CD8-positive, alpha-beta T cell (primary cell): ENCODE measurements at regions of chr12 and their contacts with region 1.

Region 1: DNA sequence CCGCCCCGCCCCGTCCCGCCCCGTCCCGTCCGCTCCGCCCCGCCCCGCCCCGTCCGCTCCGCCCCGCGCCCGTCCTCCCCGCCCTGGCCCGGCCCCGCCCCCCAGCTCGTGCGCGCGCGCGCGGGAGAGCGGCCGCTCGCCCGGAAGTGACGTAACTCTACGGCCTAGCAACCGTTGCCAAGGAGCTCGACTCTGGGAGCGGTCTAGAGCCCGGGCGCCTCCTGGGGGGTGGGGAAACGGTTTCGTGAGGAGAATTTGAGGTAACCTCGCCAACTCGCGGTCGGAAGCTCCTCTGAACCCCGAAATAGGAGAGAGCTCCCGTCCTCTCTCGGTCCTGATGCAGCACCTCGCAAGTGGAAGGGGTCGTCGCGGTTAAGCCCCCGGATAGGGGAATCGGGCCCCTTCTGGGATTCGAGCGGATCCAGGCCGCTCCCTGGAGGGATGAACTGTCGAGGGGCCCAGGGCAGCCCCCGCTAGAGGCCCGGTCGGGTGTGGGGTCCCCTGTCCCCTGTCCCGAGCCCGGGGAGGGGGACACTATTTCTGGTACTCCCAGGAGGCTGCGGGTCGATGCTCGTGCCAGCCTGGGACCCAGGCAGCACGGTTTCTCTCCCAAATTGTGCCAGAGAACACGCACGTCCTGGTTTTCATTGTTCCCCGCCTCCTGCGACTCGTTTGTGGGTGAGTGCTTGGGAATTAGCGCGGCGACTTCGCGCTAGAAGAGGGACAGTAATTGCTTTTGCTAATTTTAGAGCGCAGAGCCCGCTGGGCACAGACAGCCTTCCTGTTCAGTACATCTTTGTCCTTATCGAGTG is at the start of gene IFT81:
- DNase-seq: peak; percentile 94 to 99 (median 96)
- ATAC-seq: peak; percentile 95
- H3K4me3 ChIP-seq: peak within 1 kb of the TSS; percentile 69 to 96
- H3K4me3 Mint-ChIP-seq: peak within 1 kb of the TSS; percentile 91
- H3K27ac ChIP-seq: peak within 1 kb of the TSS; percentile 60 to 73
- H3K27ac Mint-ChIP-seq: peak within 1 kb of the TSS; percentile 83
- H3K4me1 ChIP-seq: peaks cover 10% of the 10 kb centered on the region
- H3K4me1 Mint-ChIP-seq: peaks cover 8% of the 10 kb centered on the region
- H3K27me3 ChIP-seq: no peaks in the 10 kb centered on the region
- H3K27me3 Mint-ChIP-seq: peaks cover 3% of the 10 kb centered on the region
- CTCF ChIP-seq: no peak
- total RNA-seq, gene IFT81: 0.25 to 0.43 TPM

Region 2: DNA sequence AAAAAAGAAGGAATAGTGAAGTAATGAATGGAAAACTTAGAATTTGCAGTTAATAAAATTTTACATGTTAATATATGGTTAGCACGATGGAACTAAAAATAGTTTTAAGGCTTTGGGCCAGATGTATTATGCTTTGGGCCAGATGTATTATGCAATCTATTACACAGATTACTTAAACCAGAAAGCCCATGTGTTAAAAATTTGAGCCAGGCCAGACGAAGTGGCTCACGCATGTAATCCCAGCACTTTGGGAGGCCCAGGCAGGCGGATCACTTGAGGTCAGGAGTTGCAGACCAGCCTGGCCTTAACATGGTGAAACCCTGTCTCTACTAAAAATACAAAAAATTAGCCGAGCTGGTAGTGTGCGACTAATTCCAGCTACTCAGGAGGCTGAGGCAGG is 17.0 kb after region 1 on chr12:
- CTCF ChIA-PET with region 1: no interaction called
- POLR2A ChIA-PET with region 1: no interaction called
- intact Hi-C with region 1: no loop called
- DNase-seq: no peak
- ATAC-seq: no peak
- H3K4me3 ChIP-seq: no peak overlapping the region
- H3K4me3 Mint-ChIP-seq: no peak overlapping the region
- H3K27ac ChIP-seq: no peak overlapping the region
- H3K27ac Mint-ChIP-seq: no peak overlapping the region
- H3K4me1 ChIP-seq: no peaks in the 10 kb centered on the region
- H3K4me1 Mint-ChIP-seq: no peaks in the 10 kb centered on the region
- H3K27me3 ChIP-seq: no peaks in the 10 kb centered on the region
- H3K27me3 Mint-ChIP-seq: no peaks in the 10 kb centered on the region
- CTCF ChIP-seq: no peak

Region 3: DNA sequence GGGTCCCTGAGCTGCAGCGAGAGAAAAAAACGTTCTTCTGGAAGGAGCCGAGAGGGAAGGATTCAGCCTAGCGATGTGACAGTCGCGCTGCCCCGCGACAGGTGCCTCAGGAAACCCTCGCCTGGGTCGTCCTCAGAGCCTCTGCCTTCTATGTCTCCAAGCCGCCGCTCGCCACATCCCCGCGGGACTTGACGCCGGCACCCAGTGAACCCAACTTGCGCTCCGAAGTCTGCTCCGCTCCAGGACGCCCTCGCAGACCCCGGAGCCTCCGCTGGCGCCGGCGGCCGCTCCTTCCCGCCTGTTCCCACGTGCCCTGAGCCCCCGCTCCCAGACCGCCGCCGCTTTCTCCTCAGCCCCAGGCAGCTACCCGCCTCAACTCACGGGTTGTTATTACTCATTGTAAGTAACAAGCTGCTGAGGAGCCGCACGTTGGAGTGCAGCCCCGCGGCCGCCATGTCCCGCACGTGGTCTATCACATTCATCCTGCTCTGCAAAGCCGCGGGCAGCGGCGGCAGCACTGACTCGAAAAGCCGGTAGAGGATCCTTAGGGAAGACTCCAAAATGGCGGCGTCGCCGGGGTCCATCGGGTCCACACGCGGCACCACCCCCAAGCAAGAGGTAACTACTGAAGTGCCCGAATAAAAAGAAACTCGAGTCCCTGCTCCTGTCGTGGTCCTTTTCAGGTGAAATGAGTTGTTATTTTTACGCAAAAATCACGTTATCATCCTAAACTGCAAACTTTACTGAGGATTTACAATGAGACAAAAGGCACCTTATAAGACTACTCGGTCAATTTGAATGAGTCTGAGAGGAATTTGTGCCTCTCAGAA is 279.0 kb after region 1 on chr12 and contains the start of gene ANAPC7:
- CTCF ChIA-PET with region 1: no interaction called
- POLR2A ChIA-PET with region 1: no interaction called
- intact Hi-C with region 1: loop called (anchors 5 kb)
- DNase-seq: peak; percentile 69 to 93 (median 87)
- ATAC-seq: peak; percentile 96
- H3K4me3 ChIP-seq: peak within 1 kb of the TSS; percentile 87 to 89
- H3K4me3 Mint-ChIP-seq: peak within 1 kb of the TSS; percentile 100
- H3K27ac ChIP-seq: peak within 1 kb of the TSS; percentile 78 to 96
- H3K27ac Mint-ChIP-seq: peak within 1 kb of the TSS; percentile 98
- H3K4me1 ChIP-seq: peaks cover 20% of the 10 kb centered on the region
- H3K4me1 Mint-ChIP-seq: peaks cover 33% of the 10 kb centered on the region
- H3K27me3 ChIP-seq: no peaks in the 10 kb centered on the region
- H3K27me3 Mint-ChIP-seq: no peaks in the 10 kb centered on the region
- CTCF ChIP-seq: no peak
- total RNA-seq, gene ANAPC7: 22.1 to 23.2 TPM